ENCODE measurements at regions of chr11 and their contacts with region 1.

Region 1: DNA sequence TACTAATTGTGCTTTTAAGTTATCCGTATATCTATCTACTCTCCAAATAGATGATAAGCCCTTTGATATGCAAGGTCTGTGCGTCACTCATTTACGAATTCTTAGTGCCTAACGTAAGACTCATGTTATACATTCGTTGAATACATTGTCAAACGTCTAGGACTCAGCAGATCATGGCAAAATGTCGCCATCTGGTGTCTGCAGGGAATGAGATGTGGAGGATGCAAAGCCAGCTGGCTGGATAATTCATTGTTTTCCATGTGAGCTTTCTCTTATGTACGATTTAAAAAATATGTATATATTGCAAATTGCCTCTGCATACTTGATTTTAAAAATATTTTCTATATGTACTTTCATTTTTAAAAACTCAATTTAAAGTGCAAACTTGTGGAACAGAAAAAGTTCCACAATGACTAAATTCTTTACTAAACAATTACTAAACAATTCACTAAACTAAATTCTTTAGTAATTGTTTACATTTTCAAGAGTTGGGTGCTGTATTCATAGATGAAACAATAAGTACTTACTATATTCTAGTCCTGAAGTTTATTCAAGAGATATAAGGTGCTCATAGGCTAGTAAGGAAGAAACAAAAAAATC is 33.8 kb downstream of the ZNF202 start:
- DNase-seq: peak; percentile 33 to 72 (median 55)
- ATAC-seq: peak in 1 of 2 donors; percentile 59
- H3K4me3 ChIP-seq: no peak overlapping the region
- H3K27ac ChIP-seq: no peak overlapping the region
- H3K4me1 ChIP-seq: no peaks in the 10 kb centered on the region
- H3K27me3 ChIP-seq: no peaks in the 10 kb centered on the region

Region 2: GRCh38 chr11:123246749-123247495 is 460.8 kb before region 1 on chr11:
- intact Hi-C with region 1: no loop called
- DNase-seq: peak; percentile 80 to 93 (median 90)
- ATAC-seq: peak; percentile 80 to 85
- H3K4me3 ChIP-seq: no peak overlapping the region
- H3K27ac ChIP-seq: no peak overlapping the region
- H3K4me1 ChIP-seq: peaks cover 2% of the 10 kb centered on the region
- H3K27me3 ChIP-seq: no peaks in the 10 kb centered on the region

Region 3: GRCh38 chr11:123580557-123581275 is 127.0 kb before region 1 on chr11:
- intact Hi-C with region 1: loop called (anchors 5 to 10 kb)
- DNase-seq: peak; percentile 41 to 78 (median 77)
- ATAC-seq: peak; percentile 58 to 66
- H3K4me3 ChIP-seq: no peak overlapping the region
- H3K27ac ChIP-seq: no peak overlapping the region
- H3K4me1 ChIP-seq: no peaks in the 10 kb centered on the region
- H3K27me3 ChIP-seq: no peaks in the 10 kb centered on the region

Region 4: GRCh38 chr11:123640677-123641494 is 66.8 kb before region 1 on chr11:
- intact Hi-C with region 1: loop called in 3 of 4 experiments (anchors 5 kb)
- DNase-seq: peak; percentile 25 to 69 (median 69)
- ATAC-seq: peak; percentile 76 to 80
- H3K4me3 ChIP-seq: no peak overlapping the region
- H3K27ac ChIP-seq: no peak overlapping the region
- H3K4me1 ChIP-seq: no peaks in the 10 kb centered on the region
- H3K27me3 ChIP-seq: no peaks in the 10 kb centered on the region

Region 5: DNA sequence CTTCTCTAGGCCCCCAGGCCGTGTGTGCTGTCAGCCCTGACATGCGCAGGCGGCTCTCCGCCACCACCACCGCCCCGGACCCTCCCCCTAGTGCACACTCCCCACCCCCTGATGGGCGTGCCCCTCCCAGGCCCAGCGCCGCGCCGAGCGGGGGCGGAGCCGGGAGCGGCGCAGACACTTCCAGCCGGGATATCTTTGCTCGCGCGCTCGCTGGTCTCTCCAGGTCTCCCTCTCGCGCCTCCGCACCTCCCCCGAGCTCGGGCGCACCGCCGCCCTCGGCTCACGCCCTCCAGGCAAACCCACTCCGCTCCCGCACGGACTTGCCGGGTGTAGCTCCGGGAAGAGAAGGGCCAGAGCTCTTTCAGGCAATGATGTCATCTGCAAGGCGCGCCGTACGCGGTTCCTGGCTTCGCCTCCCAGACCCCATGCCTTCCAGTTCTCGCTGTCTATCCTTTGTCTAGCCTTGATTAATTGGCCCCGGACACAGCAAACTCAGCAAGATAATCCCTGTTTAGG is 53.1 kb before region 1 on chr11 and contains the start of gene SCN3B:
- intact Hi-C with region 1: loop called in 1 of 4 experiments (anchors 10 kb)
- DNase-seq: peak; percentile 74 to 87 (median 87)
- ATAC-seq: peak; percentile 98 to 99
- H3K4me3 ChIP-seq: peak within 1 kb of the TSS; percentile 34
- H3K27ac ChIP-seq: peak within 1 kb of the TSS; percentile 44
- H3K4me1 ChIP-seq: no peaks in the 10 kb centered on the region
- H3K27me3 ChIP-seq: no peaks in the 10 kb centered on the region
- total RNA-seq, gene SCN3B: 0.20 to 0.91 (median 0.57) TPM

Region 6: DNA sequence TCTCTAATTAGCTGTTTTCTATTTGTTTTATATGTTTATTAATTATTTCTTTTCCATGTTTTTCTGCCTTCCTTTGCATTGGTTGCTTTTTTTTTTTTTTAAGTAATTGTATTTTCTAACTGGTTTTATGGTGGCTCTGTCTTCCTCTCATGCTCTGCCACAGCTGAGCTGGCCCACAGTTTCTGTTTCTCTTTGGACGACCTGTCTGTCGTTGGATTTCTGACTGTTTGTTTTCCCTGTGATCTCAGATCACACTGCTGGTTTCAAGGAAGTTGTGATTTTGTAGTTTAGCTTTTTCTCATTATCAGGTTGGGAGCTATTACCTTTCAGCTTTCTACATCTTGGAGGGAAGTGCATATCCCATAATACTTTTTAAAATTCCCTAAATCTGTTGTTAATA is 114.3 kb after region 1 on chr11:
- intact Hi-C with region 1: no loop called
- DNase-seq: no peak
- ATAC-seq: no peak
- H3K4me3 ChIP-seq: no peak overlapping the region
- H3K27ac ChIP-seq: no peak overlapping the region
- H3K4me1 ChIP-seq: peaks cover 2% of the 10 kb centered on the region
- H3K27me3 ChIP-seq: no peaks in the 10 kb centered on the region

Region 7: GRCh38 chr11:124101737-124102136 is 394.0 kb after region 1 on chr11:
- intact Hi-C with region 1: no loop called
- DNase-seq: no peak
- ATAC-seq: no peak
- H3K4me3 ChIP-seq: no peak overlapping the region
- H3K27ac ChIP-seq: no peak overlapping the region
- H3K4me1 ChIP-seq: no peaks in the 10 kb centered on the region
- H3K27me3 ChIP-seq: no peaks in the 10 kb centered on the region

Measured in right cardiac atrium (tissue), 5 donors.